ENCODE measurements at regions of chr5 and their contacts with region 1.

Region 1: DNA sequence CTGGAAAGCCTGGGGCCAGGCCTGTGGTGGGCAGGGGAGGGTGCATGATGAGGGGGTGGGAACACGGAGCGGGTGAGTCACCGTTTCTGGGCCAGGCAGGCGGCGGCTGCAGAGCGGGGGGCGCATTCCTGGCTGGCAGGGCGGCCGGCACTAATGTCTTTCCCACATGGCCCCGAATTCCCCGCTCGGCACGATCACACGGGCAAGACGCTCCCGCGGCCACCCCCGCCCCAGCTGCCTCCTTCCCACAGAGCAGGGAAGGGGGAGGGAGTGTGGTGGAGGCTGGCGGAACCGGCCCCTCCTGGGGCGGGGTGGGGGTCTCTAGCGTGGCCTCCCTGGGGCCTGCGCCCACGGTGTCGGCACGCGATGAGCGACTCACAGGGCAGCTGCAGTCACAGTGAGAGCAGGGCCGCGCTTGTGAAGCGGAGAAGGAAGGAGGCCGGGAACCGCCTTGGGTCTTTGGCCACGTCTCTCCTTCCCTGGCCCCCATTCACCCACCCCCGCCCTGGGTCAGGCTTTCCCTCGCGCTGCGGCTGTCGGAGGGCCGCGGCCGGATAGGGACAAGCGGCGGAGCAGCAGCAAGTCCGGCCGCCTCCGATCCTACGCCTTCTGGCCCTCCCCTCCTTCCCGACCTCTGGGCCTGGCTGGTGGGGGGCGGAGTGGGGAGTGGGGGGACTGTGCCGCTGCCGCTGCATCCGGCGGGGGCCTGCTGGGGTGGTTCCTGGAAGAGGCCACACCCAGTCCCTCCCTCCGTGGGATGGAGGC is 48.9 kb downstream of the CXXC5 start:
- DNase-seq: peak; percentile 69
- H3K4me3 ChIP-seq: peak overlapping the region; percentile 45
- H3K27me3 ChIP-seq: no peaks in the 10 kb centered on the region
- CTCF ChIP-seq: no peak

Region 2: GRCh38 chr5:139676406-139676805 is 20.7 kb before region 1 on chr5:
- CTCF ChIA-PET with region 1: no interaction called
- POLR2A ChIA-PET with region 1: no interaction called
- DNase-seq: no peak
- H3K4me3 ChIP-seq: no peak overlapping the region
- H3K27me3 ChIP-seq: no peaks in the 10 kb centered on the region
- CTCF ChIP-seq: no peak

Region 3: GRCh38 chr5:139711067-139711905 is 14.2 kb after region 1 on chr5:
- CTCF ChIA-PET with region 1: interaction called, 5 read pairs
- POLR2A ChIA-PET with region 1: interaction called, 18 read pairs
- DNase-seq: no peak
- H3K4me3 ChIP-seq: peak overlapping the region; percentile 44
- H3K27me3 ChIP-seq: no peaks in the 10 kb centered on the region
- CTCF ChIP-seq: peak; percentile 28